ENCODE measurements at regions of chr19 and their contacts with region 1.

Region 1: GRCh38 chr19:54325194-54325621 is 12.2 kb upstream of the LILRA5 start:
- DNase-seq: peak; percentile 59
- H3K4me3 ChIP-seq: no peak overlapping the region; a peak in 1 of 4 replicates
- H3K27ac ChIP-seq: no peak overlapping the region
- H3K4me1 ChIP-seq: no peaks in the 10 kb centered on the region
- H3K27me3 ChIP-seq: peaks cover 49% of the 10 kb centered on the region
- CTCF ChIP-seq: peak; percentile 80
- EP300 ChIP-seq: no peak
- RAD21 ChIP-seq: peak; percentile 48

Region 2: DNA sequence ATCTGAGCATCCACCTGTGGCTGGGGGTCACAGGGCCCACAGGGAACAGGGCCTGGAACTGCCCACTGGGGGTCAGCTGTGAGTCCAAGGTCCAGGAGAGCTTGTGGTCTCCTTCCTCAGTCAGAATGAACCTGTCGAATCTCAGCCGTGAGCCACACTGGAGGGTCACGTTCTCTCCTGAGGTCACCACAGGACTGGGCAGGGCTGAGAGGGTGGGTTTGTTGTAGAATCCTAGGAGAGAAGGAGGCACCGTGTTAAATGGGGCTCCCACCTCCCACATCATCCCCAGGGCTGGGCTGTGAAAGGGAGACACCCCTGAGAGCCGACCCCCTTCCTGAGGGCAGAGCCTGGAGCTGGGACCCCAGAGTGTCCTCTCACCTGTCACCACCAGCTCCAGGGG is 13.7 kb before region 1 on chr19:
- CTCF ChIA-PET with region 1: interaction called, 12 read pairs
- POLR2A ChIA-PET with region 1: no interaction called
- DNase-seq: no peak
- H3K4me3 ChIP-seq: no peak overlapping the region
- H3K27ac ChIP-seq: no peak overlapping the region
- H3K4me1 ChIP-seq: no peaks in the 10 kb centered on the region
- H3K27me3 ChIP-seq: peaks cover 58% of the 10 kb centered on the region
- CTCF ChIP-seq: no peak
- EP300 ChIP-seq: no peak
- RAD21 ChIP-seq: no peak

Measured in SK-N-SH (cell line).